A673 (cell line): ENCODE measurements at regions of chr17 and their contacts with region 1.

Region 1: GRCh38 chr17:19992803-19993713 is 15.4 kb upstream of the AKAP10 start:
- DNase-seq: peak; percentile 93
- H3K4me3 ChIP-seq: peak overlapping the region; percentile 30
- H3K27ac ChIP-seq: no peak overlapping the region
- H3K4me1 ChIP-seq: no peaks in the 10 kb centered on the region
- H3K27me3 ChIP-seq: no peaks in the 10 kb centered on the region
- CTCF ChIP-seq: peak; percentile 80

Region 2: DNA sequence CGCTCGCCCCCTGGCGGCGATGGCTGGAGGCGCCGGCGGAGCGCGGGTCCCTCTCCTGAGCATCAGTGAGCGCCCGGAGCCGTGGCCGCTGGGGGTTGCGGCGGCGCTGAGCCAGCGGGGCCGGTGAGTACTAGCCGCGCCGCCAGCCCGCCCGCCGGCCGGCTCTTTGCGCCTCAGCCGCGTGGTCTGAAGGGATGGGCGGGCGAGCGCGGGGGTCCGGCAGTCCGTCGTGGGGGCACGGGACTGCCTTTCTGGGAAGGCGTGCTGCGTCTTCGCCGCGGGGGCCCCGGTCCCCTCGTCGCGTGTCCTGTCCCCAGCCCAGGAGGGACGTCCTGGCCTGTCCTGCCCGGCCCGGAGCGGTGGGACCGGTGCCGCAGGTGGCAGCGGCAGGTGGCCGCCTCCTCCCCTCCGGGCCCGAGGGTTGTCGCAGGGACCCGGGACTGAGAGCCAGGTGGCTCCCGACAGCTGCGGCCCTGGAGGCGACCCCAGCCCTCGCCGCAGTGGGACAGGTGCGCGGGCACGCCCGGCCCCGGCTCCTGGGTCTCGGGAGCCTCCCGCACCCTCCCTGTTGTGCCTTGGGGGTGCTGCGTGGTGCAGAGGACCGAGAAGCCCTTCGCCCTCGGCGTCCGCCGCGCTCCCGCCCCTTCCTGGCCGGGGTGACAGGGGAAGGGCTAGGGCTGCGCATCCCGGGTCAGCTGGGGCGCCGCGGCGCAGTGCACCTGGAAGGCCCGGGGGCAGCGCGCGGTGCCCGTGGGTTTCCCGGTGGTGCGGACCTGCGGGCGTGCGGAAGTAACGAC is 16.4 kb after region 1 on chr17 and contains the start of gene SPECC1:
- CTCF ChIA-PET with region 1: interaction called, 22 read pairs
- POLR2A ChIA-PET with region 1: interaction called, 3 read pairs
- intact Hi-C with region 1: loop called (anchors 1 kb)
- DNase-seq: peak; percentile 79
- H3K4me3 ChIP-seq: peak within 1 kb of the TSS; percentile 52
- H3K27ac ChIP-seq: no peak within 1 kb of the TSS
- H3K4me1 ChIP-seq: peaks cover 5% of the 10 kb centered on the region
- H3K27me3 ChIP-seq: peaks cover 61% of the 10 kb centered on the region
- CTCF ChIP-seq: peak; percentile 85; the same call in 1 of the 2 replicates
- total RNA-seq, gene SPECC1: 5.8 and 6.8 TPM in 2 replicates

Region 3: DNA sequence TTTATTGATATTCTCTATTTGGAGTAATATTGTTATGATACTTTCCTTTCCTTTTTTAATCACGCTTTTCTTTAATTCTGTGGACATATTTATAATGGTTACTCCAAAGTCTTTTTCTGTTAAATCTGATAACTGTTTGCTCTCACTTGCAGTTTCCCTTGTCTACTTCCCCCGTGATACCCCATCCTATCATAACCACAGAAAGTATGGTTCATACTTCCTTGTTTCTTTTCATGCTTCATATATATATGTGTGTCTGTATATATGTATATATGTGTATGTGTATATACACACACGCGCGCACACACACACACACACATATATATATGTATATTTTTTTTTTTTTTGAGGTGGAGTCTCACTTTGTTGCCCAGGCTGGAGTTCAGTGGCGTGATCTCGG is 39.6 kb after region 1 on chr17:
- CTCF ChIA-PET with region 1: no interaction called
- POLR2A ChIA-PET with region 1: no interaction called
- intact Hi-C with region 1: no loop called
- DNase-seq: no peak
- H3K4me3 ChIP-seq: no peak overlapping the region
- H3K27ac ChIP-seq: no peak overlapping the region
- H3K4me1 ChIP-seq: no peaks in the 10 kb centered on the region
- H3K27me3 ChIP-seq: peaks cover 2% of the 10 kb centered on the region
- CTCF ChIP-seq: no peak

Region 4: DNA sequence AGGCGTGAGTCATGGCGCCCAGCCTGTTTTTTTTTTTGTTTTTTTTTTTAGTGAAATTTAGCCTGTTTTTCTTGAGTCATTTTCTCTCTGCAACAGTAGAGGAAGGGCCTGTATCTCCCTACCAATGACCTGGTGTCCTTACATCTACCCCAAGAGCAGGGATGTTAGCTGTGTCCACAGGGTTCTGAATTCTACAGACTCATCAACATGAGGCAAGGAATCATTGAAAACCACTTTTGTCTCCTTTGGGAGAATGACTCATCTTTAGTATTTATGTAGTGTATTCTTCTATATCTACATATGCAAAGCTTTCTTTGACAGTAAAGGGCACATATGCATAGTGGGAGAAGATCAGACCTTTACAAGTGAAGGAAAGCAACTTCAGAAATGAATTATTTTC is 121.4 kb after region 1 on chr17:
- CTCF ChIA-PET with region 1: interaction called, 22 read pairs
- POLR2A ChIA-PET with region 1: no interaction called
- intact Hi-C with region 1: loop called (anchors 1 kb)
- DNase-seq: peak; percentile 36
- H3K4me3 ChIP-seq: no peak overlapping the region
- H3K27ac ChIP-seq: no peak overlapping the region
- H3K4me1 ChIP-seq: no peaks in the 10 kb centered on the region
- H3K27me3 ChIP-seq: no peaks in the 10 kb centered on the region
- CTCF ChIP-seq: no peak

Region 5: GRCh38 chr17:20121359-20122253 is 128.5 kb after region 1 on chr17:
- CTCF ChIA-PET with region 1: interaction called, 19 read pairs
- POLR2A ChIA-PET with region 1: no interaction called
- intact Hi-C with region 1: loop called (anchors 1 kb)
- DNase-seq: peak; percentile 53
- H3K4me3 ChIP-seq: no peak overlapping the region
- H3K27ac ChIP-seq: no peak overlapping the region
- H3K4me1 ChIP-seq: no peaks in the 10 kb centered on the region
- H3K27me3 ChIP-seq: no peaks in the 10 kb centered on the region
- CTCF ChIP-seq: peak; percentile 96

Region 6: GRCh38 chr17:20315821-20316220 is 322.8 kb after region 1 on chr17:
- CTCF ChIA-PET with region 1: no interaction called
- POLR2A ChIA-PET with region 1: no interaction called
- intact Hi-C with region 1: loop called (anchors 5 kb)
- DNase-seq: no peak
- H3K4me3 ChIP-seq: no peak overlapping the region
- H3K27ac ChIP-seq: no peak overlapping the region
- H3K4me1 ChIP-seq: no peaks in the 10 kb centered on the region
- H3K27me3 ChIP-seq: no peaks in the 10 kb centered on the region
- CTCF ChIP-seq: no peak